Heart left ventricle (tissue), 16 donors: ENCODE measurements at regions of chr2 and their contacts with region 1.

Region 1: DNA sequence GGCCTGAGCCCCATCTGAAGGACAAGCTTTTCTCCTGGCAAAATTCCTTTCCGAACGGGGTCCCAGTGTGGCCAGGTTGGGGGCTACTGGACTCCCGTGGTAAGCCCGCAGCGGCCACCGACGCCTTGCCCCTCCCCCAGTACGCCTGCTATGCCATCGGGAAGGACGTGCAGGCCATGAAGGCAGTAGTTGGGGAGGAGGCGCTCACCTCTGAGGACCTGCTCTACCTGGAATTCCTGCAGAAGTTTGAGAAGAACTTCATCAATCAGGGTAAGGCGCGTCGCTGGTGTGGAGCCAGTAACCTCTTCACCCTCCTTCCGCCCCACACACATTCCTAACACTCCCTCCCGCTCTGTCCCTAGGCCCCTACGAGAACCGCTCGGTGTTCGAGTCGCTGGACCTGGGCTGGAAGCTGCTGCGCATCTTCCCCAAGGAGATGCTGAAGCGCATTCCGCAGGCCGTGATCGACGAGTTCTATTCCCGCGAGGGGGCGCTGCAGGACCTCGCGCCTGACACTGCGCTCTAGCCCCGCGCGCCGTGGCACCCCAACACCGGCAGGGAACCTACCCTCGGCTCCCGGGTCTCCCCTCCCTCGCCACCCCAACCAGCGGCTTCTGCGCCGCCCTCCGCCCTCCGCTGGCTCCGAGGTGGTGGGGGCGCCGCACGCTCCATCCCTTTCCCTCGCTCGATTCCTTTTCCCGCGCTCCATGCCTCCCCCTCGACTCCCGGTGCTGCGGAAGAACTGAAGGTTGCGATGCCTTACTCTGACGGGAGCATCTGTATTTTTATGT is 13.6 kb upstream of the ANKRD53 start:
- DNase-seq: peak; percentile 47 to 84 (median 70)
- ATAC-seq: peak in 3 of 4 donors; percentile 68 to 83 (median 75)
- H3K4me3 ChIP-seq: peak overlapping the region in 10 of 12 donors; percentile 15 to 60 (median 48)
- H3K27ac ChIP-seq: no peak overlapping the region
- H3K4me1 ChIP-seq: peaks cover 0 to 12% (median 2%) of the 10 kb centered on the region in 12 donors
- H3K27me3 ChIP-seq: peaks cover 6 to 38% (median 23%) of the 10 kb centered on the region in 9 donors
- CTCF ChIP-seq: peak; percentile 67 to 85 (median 76)
- POLR2A ChIP-seq: no peak

Region 2: GRCh38 chr2:70977605-70978205 is 12.9 kb after region 1 on chr2:
- intact Hi-C with region 1: loop called in 2 of 10 experiments (anchors 1 kb)
- DNase-seq: peak in 1 of 5 donors; percentile 25
- ATAC-seq: peak in 1 of 4 donors; percentile 6
- H3K4me3 ChIP-seq: peak overlapping the region in 11 of 12 donors; percentile 52 to 73 (median 64)
- H3K27ac ChIP-seq: peak overlapping the region in 10 of 12 donors; percentile 63 to 92 (median 80)
- H3K4me1 ChIP-seq: peaks cover 0 to 24% (median 15%) of the 10 kb centered on the region in 12 donors
- H3K27me3 ChIP-seq: no peaks in the 10 kb centered on the region
- CTCF ChIP-seq: peak in 2 of 12 donors; percentile 13 to 16
- POLR2A ChIP-seq: no peak

Region 3: GRCh38 chr2:71000780-71001591 is 36.2 kb after region 1 on chr2:
- intact Hi-C with region 1: loop called in 1 of 10 experiments (anchors 2 kb)
- DNase-seq: peak; percentile 64 to 85 (median 76)
- ATAC-seq: peak; percentile 43 to 85 (median 83)
- H3K4me3 ChIP-seq: peak overlapping the region in 10 of 12 donors; percentile 11 to 50 (median 27)
- H3K27ac ChIP-seq: no peak overlapping the region
- H3K4me1 ChIP-seq: peaks cover 0 to 9% (median 3%) of the 10 kb centered on the region in 12 donors
- H3K27me3 ChIP-seq: no peaks in the 10 kb centered on the region
- CTCF ChIP-seq: peak; percentile 86 to 98 (median 92)
- POLR2A ChIP-seq: no peak